GM10248 (cell line): ENCODE measurements at regions of chr13 and their contacts with region 1.

Region 1: GRCh38 chr13:77113496-77113895 is 86.5 kb upstream of the FBXL3 start:
- DNase-seq: no peak
- CTCF ChIP-seq: no peak

Region 2: GRCh38 chr13:77099415-77099814 is 14.1 kb before region 1 on chr13:
- CTCF ChIA-PET with region 1: interaction called, 12 read pairs
- POLR2A ChIA-PET with region 1: no interaction called
- DNase-seq: no peak
- CTCF ChIP-seq: no peak